ENCODE measurements at regions of chr15 and their contacts with region 1.

Region 1: DNA sequence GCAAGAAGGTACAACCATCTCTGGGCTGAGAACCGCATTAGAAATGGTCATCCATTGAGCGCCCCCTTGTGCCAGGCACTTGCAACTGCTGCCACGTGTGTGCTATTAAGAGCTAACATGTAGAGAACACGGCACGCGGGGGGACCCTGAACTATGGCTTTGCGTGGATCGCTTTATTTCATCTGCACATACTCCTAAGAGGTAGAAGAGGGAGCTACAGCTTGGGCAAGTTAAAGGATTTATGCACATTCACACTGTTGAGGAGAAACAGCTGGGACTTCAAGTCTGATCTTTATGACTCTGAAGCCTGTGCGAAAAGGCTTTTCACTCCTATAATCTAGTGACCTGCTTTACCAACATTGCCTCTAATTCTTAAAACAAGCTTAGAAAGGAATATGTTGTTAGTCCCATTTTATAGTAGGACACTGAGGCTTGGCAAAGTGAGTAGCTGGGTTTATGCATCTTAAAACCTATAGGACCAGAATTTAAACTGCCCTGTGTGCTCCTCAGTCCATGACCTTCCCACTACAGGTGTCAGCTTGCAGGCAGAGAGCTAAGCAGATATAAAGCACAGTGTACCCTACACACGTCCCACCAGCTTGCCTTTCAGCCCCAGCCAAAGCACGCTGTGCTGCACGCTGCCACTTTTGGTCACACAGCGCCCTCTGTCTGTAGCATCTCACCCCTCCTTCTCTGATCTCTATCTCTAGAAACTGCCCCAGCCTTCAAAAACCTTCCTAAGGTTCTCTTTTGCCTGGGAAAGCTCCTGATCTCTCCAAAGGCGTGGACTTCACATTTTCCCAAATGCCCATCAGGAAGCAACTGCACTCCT is 57.8 kb downstream of the STARD5 start:
- DNase-seq: peak; percentile 86
- H3K27ac ChIP-seq: no peak overlapping the region
- CTCF ChIP-seq: peak; percentile 93

Region 2: GRCh38 chr15:80776420-80777045 is 489.6 kb before region 1 on chr15:
- CTCF ChIA-PET with region 1: interaction called, 10 read pairs
- POLR2A ChIA-PET with region 1: no interaction called
- DNase-seq: no peak
- H3K27ac ChIP-seq: peak overlapping the region; percentile 68
- CTCF ChIP-seq: peak; percentile 36; the same call in 1 of the 2 replicates

Region 3: GRCh38 chr15:81054236-81054635 is 211.9 kb before region 1 on chr15:
- CTCF ChIA-PET with region 1: no interaction called
- POLR2A ChIA-PET with region 1: no interaction called
- DNase-seq: no peak
- H3K27ac ChIP-seq: no peak overlapping the region
- CTCF ChIP-seq: no peak

Region 4: DNA sequence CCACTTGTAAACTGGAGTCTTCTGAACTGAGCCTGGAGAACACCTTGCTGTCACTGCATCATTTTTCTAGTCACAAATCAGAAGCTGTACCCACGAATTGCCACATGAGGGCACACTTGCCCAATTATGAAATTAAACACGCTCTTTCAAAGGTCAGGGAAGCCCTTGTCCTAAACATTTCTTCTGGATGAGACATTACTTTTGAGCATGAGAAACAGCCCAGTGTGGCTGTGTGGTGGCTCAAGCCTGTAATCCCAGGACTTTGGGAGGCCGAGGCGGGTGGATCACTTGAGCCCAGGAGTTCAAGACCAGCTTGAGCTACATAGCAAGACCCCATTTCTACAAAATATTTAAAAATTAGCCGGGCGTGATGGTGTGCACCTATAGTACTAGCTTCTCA is 159.6 kb before region 1 on chr15:
- CTCF ChIA-PET with region 1: interaction called, 103 read pairs
- POLR2A ChIA-PET with region 1: no interaction called
- DNase-seq: peak; percentile 70
- H3K27ac ChIP-seq: no peak overlapping the region
- CTCF ChIP-seq: peak; percentile 94

Region 5: DNA sequence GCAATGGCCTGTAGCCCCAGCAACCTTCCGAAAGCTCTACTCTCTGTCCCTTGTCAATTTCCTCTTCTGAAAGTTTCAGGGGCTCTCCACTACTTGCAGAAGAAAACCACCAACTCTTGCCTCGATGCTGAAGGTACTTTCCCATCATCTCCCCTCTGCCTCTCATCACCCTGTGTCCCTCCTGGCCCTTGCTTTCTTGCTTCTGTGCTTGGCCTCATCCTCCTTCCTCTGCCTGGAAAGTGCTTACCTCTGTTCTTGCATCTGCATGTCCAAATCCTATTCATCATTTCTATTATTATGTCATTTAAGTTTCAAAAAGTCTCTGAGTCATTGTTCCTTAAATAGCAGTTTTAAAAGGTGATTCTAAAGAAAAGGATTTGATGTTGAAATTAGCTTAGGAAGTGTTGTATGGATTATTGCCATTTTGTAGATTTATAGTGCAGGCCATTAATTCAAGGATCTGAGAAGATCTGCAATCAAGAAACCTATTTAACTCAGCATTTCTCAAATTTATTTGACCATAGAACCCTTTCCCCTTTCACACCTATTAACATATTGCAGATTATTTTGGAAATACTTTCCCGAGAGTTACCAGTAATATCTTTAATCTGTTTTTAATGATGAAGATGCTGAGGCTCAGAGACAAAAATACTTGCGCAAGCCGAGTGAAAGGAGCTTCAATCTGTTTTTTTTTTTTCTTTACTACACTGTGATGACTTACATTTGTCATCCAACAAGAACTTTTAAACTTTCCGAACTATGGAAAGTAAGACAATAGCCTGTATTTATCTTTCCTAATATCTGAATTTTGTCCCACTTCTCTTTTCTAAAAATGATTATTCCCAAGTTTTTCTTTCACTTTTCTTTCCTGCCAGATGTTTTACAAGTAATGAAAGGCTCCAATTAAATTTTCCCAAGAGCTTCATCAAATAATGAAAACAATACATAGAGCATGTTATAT is 154.4 kb before region 1 on chr15:
- CTCF ChIA-PET with region 1: interaction called, 103 read pairs
- POLR2A ChIA-PET with region 1: no interaction called
- DNase-seq: peak; percentile 67
- H3K27ac ChIP-seq: peak overlapping the region; percentile 93
- CTCF ChIP-seq: no peak

Region 6: GRCh38 chr15:81117136-81117535 is 149.0 kb before region 1 on chr15:
- CTCF ChIA-PET with region 1: interaction called, 16 read pairs
- POLR2A ChIA-PET with region 1: no interaction called
- DNase-seq: no peak
- H3K27ac ChIP-seq: no peak overlapping the region
- CTCF ChIP-seq: no peak

Region 7: DNA sequence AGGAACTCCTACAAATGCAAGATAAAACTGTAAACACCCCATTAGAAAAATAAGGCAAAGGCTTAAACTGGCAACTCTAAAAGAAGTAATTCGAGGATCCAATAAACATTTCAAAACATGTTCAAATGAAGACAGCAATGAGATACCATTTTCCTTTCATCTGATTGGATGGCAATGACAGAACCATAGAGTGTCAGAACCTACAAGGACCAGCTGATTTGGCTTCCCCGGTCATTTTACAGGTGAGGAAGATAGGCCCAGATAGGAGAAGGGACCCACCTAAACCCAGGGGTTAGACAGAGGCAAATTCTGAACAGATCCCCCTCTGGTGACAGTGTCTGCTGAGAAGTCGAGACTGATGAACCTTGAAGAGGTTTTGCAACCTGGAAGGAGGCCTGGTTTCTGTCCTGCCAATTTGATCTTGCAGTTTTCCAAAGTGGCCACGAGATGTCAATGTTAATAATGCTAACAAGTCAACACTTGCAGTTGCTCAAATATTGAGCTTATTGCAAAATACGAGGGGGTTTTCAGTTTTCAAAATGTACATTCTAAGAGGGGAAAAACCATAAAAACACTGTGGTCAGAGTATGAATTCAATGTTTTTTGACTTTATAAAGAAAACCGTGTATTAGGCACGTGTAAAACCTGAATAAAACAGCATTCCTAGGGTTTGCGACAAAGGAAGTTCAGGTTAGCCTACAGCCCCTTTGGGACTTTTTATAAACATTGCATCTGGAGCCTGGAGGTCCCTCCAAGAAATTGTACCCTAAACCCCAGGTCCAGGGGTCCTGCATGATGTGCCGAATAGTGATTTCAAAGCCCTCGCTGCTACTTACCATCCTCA is 110.6 kb before region 1 on chr15:
- CTCF ChIA-PET with region 1: interaction called, 36 read pairs
- POLR2A ChIA-PET with region 1: interaction called, 3 read pairs
- DNase-seq: peak; percentile 57
- H3K27ac ChIP-seq: peak overlapping the region; percentile 63; the same call in 1 of the 2 replicates
- CTCF ChIP-seq: peak; percentile 88